ENCODE measurements at regions of chr2 and their contacts with region 1.

Region 1: GRCh38 chr2:105114551-105114950 is 76.7 kb downstream of the MRPS9 start:
- DNase-seq: no peak
- ATAC-seq: peak; percentile 60
- H3K4me3 ChIP-seq: no peak overlapping the region
- H3K27ac ChIP-seq: no peak overlapping the region
- H3K4me1 ChIP-seq: no peaks in the 10 kb centered on the region
- H3K27me3 ChIP-seq: no peaks in the 10 kb centered on the region
- CTCF ChIP-seq: peak; percentile 22 to 71 (median 56)
- POLR2A ChIP-seq: no peak

Region 2: DNA sequence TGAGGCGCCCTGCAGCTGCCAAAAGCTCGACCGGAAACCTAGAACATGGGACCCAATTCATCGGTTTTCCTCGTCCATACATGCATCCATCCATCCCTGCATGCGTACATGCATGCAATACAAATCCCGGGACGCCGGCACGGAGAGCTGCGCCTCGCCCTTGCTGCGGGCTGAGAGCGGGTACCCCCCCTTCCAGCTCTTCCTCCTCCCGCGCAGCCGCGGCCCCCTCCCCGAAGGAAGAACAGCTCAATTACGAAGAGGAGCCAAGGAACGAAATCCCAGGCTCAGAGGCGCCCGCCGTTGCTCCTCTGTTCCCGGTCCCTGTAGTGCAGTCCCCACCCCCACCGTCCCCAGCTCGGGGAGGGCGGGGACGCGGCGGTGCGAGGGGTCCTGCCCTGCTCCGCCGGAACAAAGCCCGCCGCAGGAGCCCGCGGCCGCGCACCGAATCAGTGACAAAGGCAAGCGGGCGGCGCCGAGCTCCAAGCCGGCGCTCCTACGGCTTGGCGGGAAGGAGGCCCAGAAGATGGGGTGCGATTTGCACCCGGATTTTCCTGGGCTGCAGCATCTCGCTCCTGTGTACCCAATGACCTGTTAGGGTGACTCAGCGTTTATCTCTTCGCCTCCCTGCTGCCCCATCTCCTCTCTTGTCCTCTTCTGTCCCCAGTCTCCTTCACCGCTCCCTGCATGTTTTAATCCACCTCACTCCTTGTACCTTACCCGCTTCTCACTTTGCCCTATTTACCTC is 269.6 kb before region 1 on chr2:
- intact Hi-C with region 1: no loop called
- DNase-seq: no peak
- ATAC-seq: no peak
- H3K4me3 ChIP-seq: no peak overlapping the region
- H3K27ac ChIP-seq: no peak overlapping the region
- H3K4me1 ChIP-seq: peaks cover 27% of the 10 kb centered on the region
- H3K27me3 ChIP-seq: peaks cover 0 to 48% of the 10 kb centered on the region in 2 donors
- CTCF ChIP-seq: no peak
- POLR2A ChIP-seq: no peak

Region 3: DNA sequence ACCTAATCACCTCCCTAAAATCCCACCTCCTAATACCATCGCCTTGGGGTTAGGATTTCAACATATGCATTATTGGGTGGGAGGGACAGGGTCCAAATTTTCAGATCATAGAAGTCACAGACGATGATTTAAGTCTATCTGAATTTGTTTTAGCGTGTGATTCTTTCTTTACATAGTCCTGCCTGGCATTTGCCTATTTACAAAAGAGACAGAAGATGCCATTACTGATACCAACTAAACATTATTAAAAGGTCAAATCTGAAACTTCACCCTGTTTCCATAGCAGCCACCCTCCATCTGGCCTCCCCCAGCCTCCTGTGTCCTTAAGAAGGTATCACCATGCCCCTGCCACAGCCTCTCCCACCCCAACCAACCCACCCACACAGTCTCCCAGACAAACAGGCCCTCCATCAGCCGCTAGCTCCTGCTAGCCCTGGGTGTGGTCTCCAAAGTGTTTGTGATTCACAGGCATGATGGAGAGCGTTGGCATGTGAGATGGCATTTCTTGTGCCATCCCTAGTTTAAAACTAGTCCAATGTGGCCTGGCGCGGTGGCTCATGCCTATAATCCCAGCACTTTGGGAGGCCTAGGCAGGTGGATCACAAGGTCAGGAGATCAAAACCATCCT is 82.0 kb after region 1 on chr2:
- intact Hi-C with region 1: no loop called
- DNase-seq: no peak
- ATAC-seq: no peak
- H3K4me3 ChIP-seq: no peak overlapping the region
- H3K27ac ChIP-seq: no peak overlapping the region
- H3K4me1 ChIP-seq: no peaks in the 10 kb centered on the region
- H3K27me3 ChIP-seq: no peaks in the 10 kb centered on the region
- CTCF ChIP-seq: no peak
- POLR2A ChIP-seq: no peak

Region 4: DNA sequence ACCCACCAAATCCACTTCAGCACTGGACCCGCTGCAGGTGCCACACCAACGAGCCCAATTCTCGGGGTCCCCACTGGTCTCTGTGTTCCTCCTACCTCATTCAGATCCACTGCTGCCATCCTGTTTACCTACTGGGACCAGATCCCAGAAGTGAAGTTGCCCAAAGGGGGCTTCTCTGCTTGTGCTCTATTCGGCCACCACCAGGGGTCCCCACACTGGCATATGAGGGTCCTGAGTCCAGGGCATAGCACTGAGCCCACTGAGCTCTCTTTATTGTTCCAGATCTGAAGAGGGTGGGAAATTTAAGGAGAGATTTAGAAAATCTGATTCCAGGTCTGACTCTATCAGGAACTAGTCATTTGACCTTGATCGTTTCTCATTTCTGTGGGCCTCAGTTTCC is 129.4 kb after region 1 on chr2:
- intact Hi-C with region 1: loop called (anchors 5 kb)
- DNase-seq: no peak
- ATAC-seq: no peak
- H3K4me3 ChIP-seq: no peak overlapping the region
- H3K27ac ChIP-seq: no peak overlapping the region
- H3K4me1 ChIP-seq: no peaks in the 10 kb centered on the region
- H3K27me3 ChIP-seq: no peaks in the 10 kb centered on the region
- CTCF ChIP-seq: no peak
- POLR2A ChIP-seq: no peak

Region 5: DNA sequence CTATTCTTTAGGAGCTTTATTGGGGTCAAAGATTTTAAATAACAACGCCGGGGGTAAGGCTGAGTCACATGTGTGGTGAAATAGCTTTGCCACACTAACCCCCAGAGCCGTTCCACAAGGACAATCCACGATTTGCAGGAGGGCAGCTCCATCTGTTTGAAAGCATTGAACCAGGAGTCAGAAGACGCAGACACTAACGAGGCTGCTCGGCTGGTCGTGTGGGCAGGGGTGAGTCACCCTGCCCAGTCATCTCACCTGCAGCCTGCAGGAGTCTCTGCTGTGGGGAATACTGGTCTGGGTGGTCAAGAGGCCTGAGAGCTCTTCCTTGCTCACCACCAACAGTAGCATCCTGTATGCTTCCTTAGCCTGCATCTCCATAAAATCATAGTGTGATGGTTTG is 481.0 kb after region 1 on chr2:
- intact Hi-C with region 1: no loop called
- DNase-seq: no peak
- ATAC-seq: no peak
- H3K4me3 ChIP-seq: no peak overlapping the region
- H3K27ac ChIP-seq: no peak overlapping the region
- H3K4me1 ChIP-seq: peaks cover 9% of the 10 kb centered on the region
- H3K27me3 ChIP-seq: no peaks in the 10 kb centered on the region
- CTCF ChIP-seq: no peak
- POLR2A ChIP-seq: no peak